GM10248 (cell line): ENCODE measurements at regions of chr5 and their contacts with region 1.

Region 1: GRCh38 chr5:126348855-126349635 is 74.2 kb upstream of the GRAMD2B start:
- DNase-seq: no peak
- CTCF ChIP-seq: no peak

Region 2: GRCh38 chr5:126538579-126538978 is 189.5 kb after region 1 on chr5:
- CTCF ChIA-PET with region 1: interaction called, 220 read pairs
- POLR2A ChIA-PET with region 1: no interaction called
- DNase-seq: no peak
- CTCF ChIP-seq: no peak